ENCODE measurements at regions of chr16 and their contacts with region 1.

Region 1: DNA sequence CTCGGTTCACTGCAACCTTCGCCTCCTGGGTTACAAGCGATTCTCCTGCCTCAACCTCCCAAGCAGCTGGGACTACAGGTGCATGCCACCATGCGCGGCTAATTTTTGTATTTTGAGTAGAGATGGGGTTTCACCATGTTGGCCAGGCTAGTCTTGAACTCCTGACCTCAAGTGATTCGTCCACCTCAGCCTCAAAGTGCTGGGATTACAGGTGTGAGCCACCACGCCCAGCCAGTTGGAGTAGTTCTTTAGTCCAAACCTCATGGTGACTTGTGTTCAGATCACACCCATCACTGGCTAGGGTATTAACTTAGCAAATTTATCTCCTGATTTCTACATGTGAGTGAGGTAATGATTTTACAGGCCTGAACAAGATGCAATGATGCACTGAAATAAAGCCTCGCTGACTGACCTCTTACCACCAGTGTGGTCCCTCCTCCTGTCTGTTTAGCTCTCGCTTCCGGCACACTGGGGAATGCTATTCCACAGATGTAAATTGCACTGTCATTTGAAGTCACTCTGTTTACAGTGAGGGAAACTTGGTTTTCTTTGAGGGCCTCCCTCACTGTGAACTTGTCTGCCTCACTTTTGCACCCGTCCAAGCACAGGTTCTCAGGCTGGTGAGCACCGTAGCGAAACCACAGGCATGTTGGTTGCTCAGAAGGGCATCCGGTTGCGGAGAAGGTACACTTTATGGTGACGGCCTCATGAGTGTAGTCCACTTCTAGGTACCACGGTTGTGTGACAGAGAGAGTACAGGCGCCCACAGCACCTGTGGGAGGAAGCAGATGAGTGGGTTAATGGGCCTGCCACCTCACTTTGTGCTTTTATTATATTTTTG is 5.5 kb downstream of the IGSF6 start:
- DNase-seq: peak; percentile 62
- H3K4me3 ChIP-seq: no peak overlapping the region
- H3K27ac ChIP-seq: peak overlapping the region; percentile 60 to 66 (median 62)
- H3K4me1 ChIP-seq: peaks cover 4 to 23% (median 14%) of the 10 kb centered on the region in 4 donors
- H3K27me3 ChIP-seq: no peaks in the 10 kb centered on the region
- CTCF ChIP-seq: no peak
- EP300 ChIP-seq: no peak
- POLR2A ChIP-seq: no peak

Region 2: GRCh38 chr16:21599233-21600030 is 47.5 kb before region 1 on chr16 and contains the start of gene METTL9:
- in situ Hi-C with region 1: loop called in 1 of 4 experiments (anchors 10 kb)
- intact Hi-C with region 1: no loop called
- DNase-seq: peak; percentile 95
- H3K4me3 ChIP-seq: peak within 1 kb of the TSS; percentile 83 to 95 (median 92)
- H3K27ac ChIP-seq: peak within 1 kb of the TSS; percentile 96 to 99 (median 98)
- H3K4me1 ChIP-seq: peaks cover 8 to 32% (median 16%) of the 10 kb centered on the region in 4 donors
- H3K27me3 ChIP-seq: no peaks in the 10 kb centered on the region
- CTCF ChIP-seq: peak in 1 of 5 experiments; percentile 24
- EP300 ChIP-seq: no peak
- POLR2A ChIP-seq: peak; percentile 80
- total RNA-seq, gene METTL9: 41.9 to 116 (median 67.5) TPM

Measured in transverse colon (tissue), 4 donors.